CD4-positive, alpha-beta T cell (primary cell): ENCODE measurements at regions of chr1 and their contacts with region 1.

Region 1: GRCh38 chr1:147225193-147225730 is at the start of gene FMO5:
- DNase-seq: peak; percentile 14 to 77 (median 36)
- ATAC-seq: peak; percentile 98
- H3K4me3 ChIP-seq: peak within 1 kb of the TSS; percentile 68
- H3K4me3 Mint-ChIP-seq: peak within 1 kb of the TSS; percentile 89
- H3K27ac ChIP-seq: peak within 1 kb of the TSS in 1 of 2 donors; percentile 1
- H3K27ac Mint-ChIP-seq: peak within 1 kb of the TSS; percentile 47
- H3K4me1 ChIP-seq: peaks cover 9% of the 10 kb centered on the region
- H3K4me1 Mint-ChIP-seq: peaks cover 20% of the 10 kb centered on the region
- H3K27me3 ChIP-seq: no peaks in the 10 kb centered on the region
- H3K27me3 Mint-ChIP-seq: no peaks in the 10 kb centered on the region
- CTCF ChIP-seq: no peak
- total RNA-seq, gene FMO5: 0.41 to 0.67 TPM

Region 2: GRCh38 chr1:147172168-147172992 is 52.9 kb before region 1 on chr1 and contains the start of gene PRKAB2:
- CTCF ChIA-PET with region 1: no interaction called
- POLR2A ChIA-PET with region 1: interaction called, 7 read pairs
- intact Hi-C with region 1: loop called in 1 of 2 experiments (anchors 5 kb)
- DNase-seq: peak; percentile 73 to 95 (median 86)
- ATAC-seq: peak; percentile 77
- H3K4me3 ChIP-seq: peak within 1 kb of the TSS; percentile 89
- H3K4me3 Mint-ChIP-seq: peak within 1 kb of the TSS; percentile 99
- H3K27ac ChIP-seq: peak within 1 kb of the TSS; percentile 57 to 82
- H3K27ac Mint-ChIP-seq: peak within 1 kb of the TSS; percentile 92
- H3K4me1 ChIP-seq: peaks cover 25% of the 10 kb centered on the region
- H3K4me1 Mint-ChIP-seq: peaks cover 54% of the 10 kb centered on the region
- H3K27me3 ChIP-seq: no peaks in the 10 kb centered on the region
- H3K27me3 Mint-ChIP-seq: no peaks in the 10 kb centered on the region
- CTCF ChIP-seq: peak; percentile 90
- total RNA-seq, gene PRKAB2: 7.4 to 9.6 TPM